ENCODE measurements at regions of chr13 and their contacts with region 1.

Region 1: GRCh38 chr13:49300739-49301589 is 53.2 kb downstream of the CDADC1 start:
- DNase-seq: no peak
- H3K4me3 ChIP-seq: no peak overlapping the region
- H3K27me3 ChIP-seq: no peaks in the 10 kb centered on the region
- CTCF ChIP-seq: peak; percentile 80

Region 2: DNA sequence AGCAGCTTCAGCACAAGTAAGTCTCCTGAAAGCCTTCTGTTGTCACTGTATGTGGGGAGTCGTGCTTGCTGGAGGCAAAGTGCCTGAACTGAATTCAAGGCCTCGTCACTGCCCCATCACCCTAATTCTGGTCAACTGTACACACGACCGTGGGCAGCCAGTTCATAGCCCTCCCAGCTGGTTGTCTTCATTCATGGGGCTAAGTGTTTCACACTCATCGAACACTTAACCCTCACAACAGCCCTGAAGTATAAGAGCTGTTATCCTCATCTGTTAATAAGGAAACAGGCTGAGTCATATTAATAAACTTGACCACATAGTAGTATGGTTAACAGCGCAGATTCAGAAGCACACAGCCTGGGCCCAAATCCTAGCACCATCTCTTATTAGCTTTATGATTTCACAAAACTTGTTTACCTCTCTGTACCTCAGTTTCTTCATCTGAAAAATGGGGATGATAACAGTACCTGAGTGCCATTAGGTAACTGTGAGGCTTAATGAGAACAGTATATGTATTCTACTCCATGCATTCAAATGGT is 13.4 kb after region 1 on chr13:
- CTCF ChIA-PET with region 1: interaction called, 16 read pairs
- POLR2A ChIA-PET with region 1: no interaction called
- DNase-seq: no peak
- H3K4me3 ChIP-seq: no peak overlapping the region
- H3K27me3 ChIP-seq: no peaks in the 10 kb centered on the region
- CTCF ChIP-seq: no peak

Region 3: GRCh38 chr13:49436890-49437289 is 135.9 kb after region 1 on chr13:
- CTCF ChIA-PET with region 1: interaction called, 28 read pairs
- POLR2A ChIA-PET with region 1: no interaction called
- DNase-seq: no peak
- H3K4me3 ChIP-seq: no peak overlapping the region
- H3K27me3 ChIP-seq: no peaks in the 10 kb centered on the region
- CTCF ChIP-seq: peak; percentile 17; the same call in 1 of the 2 replicates

Measured in BJ (cell line).